Astrocyte of the cerebellum (primary cell): ENCODE measurements at regions of chr9 and their contacts with region 1.

Region 1: GRCh38 chr9:33290247-33291030 is at the start of gene NFX1:
- DNase-seq: peak; percentile 97
- H3K4me3 ChIP-seq: peak within 1 kb of the TSS; percentile 81
- CTCF ChIP-seq: no peak

Region 2: DNA sequence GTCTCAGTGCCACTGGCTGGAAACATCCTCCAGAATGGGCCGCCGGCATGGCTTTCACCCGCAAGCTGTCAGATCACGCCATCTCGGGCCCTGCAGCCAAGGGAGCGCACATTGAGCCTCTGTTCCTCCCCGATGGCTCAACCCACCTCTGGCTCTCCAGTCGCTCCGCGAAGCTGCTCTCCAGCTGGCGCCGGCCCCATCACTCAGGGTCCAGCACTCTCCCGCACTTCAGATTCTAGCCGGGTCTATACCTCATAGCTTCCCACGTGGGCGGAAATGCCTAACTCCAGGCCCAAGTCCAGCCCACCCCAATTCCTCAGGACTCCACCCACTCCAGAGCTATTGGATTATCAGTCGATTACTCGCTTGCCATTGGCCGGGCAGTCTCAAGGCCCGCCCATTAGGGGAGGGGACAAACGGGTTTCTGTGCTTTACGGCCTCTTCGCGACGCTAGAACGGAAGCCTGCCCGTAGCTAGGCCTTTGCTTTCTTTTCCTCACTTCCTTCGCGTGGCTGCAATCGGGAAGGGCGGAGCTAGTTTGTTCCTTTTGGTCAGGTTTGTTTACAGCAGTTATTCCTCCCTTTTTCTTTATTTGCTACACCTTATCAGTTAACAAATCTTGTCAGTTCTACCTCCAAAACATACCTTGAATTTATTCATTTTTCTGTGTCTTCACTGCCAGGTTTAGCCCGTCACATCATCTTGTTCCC is 183.4 kb after region 1 on chr9 and contains the start of gene NOL6:
- in situ Hi-C with region 1: loop called (anchors 25 kb)
- DNase-seq: peak; percentile 99
- H3K4me3 ChIP-seq: peak within 1 kb of the TSS; percentile 81
- CTCF ChIP-seq: no peak